ENCODE measurements at regions of chr3 and their contacts with region 1.

Region 1: GRCh38 chr3:99023590-99024192 is 122.2 kb upstream of the DCBLD2 start:
- H3K4me3 Mint-ChIP-seq: no peak overlapping the region
- H3K27ac Mint-ChIP-seq: no peak overlapping the region
- H3K4me1 Mint-ChIP-seq: no peaks in the 10 kb centered on the region
- H3K27me3 Mint-ChIP-seq: no peaks in the 10 kb centered on the region

Region 2: DNA sequence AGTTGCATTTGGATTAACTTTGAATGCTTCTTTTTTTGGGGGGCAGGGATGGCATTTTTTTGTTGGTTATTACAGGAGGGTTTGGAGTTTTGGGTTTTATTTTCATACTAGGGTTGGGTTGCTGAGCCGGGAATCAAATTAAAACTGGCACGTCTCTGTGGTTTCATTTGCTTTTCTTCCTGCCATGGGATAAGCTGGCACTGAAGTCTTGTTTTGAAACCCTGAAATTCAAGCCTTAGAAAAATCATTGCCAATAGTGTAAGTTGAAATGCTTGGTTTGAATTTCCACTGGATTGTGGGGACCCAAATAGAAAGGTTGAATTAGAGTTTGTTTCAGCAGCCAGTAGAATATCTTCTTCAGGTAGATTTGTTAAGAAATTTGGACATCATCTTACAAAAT is 70.9 kb after region 1 on chr3:
- intact Hi-C with region 1: no loop called
- H3K4me3 Mint-ChIP-seq: no peak overlapping the region
- H3K27ac Mint-ChIP-seq: no peak overlapping the region
- H3K4me1 Mint-ChIP-seq: no peaks in the 10 kb centered on the region
- H3K27me3 Mint-ChIP-seq: no peaks in the 10 kb centered on the region

Region 3: DNA sequence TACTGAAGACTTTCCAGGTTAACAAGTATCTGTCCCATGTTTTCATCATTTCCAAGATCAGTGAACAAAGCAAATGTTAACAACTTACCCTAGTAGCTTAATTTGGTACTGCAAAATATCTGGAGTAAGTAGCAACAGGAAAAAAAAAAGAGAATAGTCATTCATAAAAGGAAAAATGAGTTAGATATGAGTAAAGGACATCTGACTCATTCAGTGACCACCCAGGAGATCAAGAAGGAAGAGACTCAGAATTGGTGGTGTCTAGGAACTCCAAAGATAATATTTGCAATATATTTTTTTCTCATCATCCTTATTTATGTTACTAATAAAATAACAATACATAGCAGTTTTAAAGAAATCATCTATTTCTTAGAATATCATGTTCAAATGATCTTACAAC is 360.9 kb after region 1 on chr3:
- intact Hi-C with region 1: no loop called
- H3K4me3 Mint-ChIP-seq: no peak overlapping the region
- H3K27ac Mint-ChIP-seq: no peak overlapping the region
- H3K4me1 Mint-ChIP-seq: no peaks in the 10 kb centered on the region
- H3K27me3 Mint-ChIP-seq: no peaks in the 10 kb centered on the region

Region 4: GRCh38 chr3:99532246-99532645 is 508.6 kb after region 1 on chr3:
- intact Hi-C with region 1: loop called (anchors 5 kb)
- H3K4me3 Mint-ChIP-seq: no peak overlapping the region
- H3K27ac Mint-ChIP-seq: no peak overlapping the region
- H3K4me1 Mint-ChIP-seq: peaks cover 12% of the 10 kb centered on the region
- H3K27me3 Mint-ChIP-seq: no peaks in the 10 kb centered on the region

Region 5: DNA sequence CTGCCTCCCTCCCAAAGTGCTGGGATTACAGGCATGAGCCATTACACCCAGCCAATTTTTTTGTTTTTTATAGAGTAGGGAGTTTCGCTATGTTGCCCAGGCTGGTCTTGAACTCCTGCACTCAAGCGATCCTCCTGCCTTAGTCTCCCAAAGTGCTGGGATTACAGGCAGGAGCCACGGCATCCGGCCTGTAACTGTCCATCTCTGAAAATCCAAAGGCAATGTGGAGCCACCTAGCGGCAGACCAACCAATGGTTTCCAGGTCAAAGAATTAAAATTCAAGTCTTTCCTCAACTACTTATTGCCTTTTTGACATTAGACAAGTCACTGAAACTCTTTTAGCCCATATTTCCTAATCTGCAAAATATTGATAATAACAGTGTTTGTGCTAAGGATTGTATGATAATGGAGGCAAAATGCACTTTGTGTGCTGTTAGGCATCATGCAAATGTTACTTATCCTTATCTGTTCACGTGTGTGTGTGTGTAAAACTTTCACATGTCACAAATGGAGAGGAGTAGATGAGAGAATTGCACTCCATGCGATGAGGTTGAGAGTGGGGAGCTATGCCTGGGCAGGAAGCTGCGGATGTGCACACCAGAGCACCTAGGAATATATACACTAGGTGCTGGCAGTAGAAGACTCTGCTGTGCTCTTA is 663.4 kb after region 1 on chr3:
- intact Hi-C with region 1: loop called (anchors 5 kb)
- H3K4me3 Mint-ChIP-seq: no peak overlapping the region
- H3K27ac Mint-ChIP-seq: no peak overlapping the region
- H3K4me1 Mint-ChIP-seq: no peaks in the 10 kb centered on the region
- H3K27me3 Mint-ChIP-seq: no peaks in the 10 kb centered on the region

Region 6: DNA sequence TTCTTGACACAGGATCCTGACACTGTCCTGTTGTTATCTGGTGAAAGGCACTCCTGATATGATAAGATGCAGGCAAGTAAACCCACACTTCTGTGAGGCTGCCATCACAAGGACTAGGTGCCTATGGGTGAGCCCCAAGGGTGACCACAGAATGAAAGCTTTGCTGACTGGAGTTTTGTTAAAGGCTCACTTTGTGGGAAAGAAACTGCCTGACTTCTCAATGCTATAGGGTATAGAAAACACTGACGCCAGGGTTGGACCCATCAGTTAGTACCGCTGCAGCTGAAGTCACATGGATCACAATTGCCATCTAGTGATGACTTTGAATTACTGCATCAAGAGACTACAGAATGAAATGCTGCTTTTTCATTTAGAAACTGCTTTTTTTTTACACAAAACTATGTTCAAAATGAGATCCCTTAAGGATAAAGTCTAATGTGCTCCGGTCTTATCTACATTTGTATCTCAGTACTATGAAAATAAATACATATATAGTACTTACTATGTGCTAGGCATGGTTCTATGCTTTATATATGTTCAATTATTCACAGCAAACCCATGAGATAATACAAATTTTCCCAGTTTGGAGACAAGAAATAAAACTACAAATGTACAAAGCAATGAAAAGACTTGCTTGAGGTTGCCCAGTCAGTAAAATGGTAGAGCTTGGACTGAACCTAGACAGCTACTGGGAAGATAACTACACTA is 729.7 kb after region 1 on chr3:
- intact Hi-C with region 1: loop called (anchors 5 kb)
- H3K4me3 Mint-ChIP-seq: no peak overlapping the region
- H3K27ac Mint-ChIP-seq: no peak overlapping the region
- H3K4me1 Mint-ChIP-seq: no peaks in the 10 kb centered on the region
- H3K27me3 Mint-ChIP-seq: no peaks in the 10 kb centered on the region